ENCODE measurements at regions of chr9 and their contacts with region 1.

Region 1: GRCh38 chr9:76321205-76321828 is 72.9 kb downstream of the RFK start:
- DNase-seq: no peak
- H3K4me3 ChIP-seq: no peak overlapping the region
- H3K27ac ChIP-seq: no peak overlapping the region
- H3K4me1 ChIP-seq: no peaks in the 10 kb centered on the region
- H3K27me3 ChIP-seq: no peaks in the 10 kb centered on the region
- CTCF ChIP-seq: no peak
- POLR2A ChIP-seq: no peak

Region 2: GRCh38 chr9:75185585-75186170 is 1135.6 kb before region 1 on chr9:
- intact Hi-C with region 1: loop called (anchors 10 kb)
- DNase-seq: peak; percentile 13
- H3K4me3 ChIP-seq: no peak overlapping the region
- H3K27ac ChIP-seq: no peak overlapping the region
- H3K4me1 ChIP-seq: no peaks in the 10 kb centered on the region
- H3K27me3 ChIP-seq: no peaks in the 10 kb centered on the region
- CTCF ChIP-seq: peak in 3 of 4 experiments; percentile 12 to 34 (median 34)
- POLR2A ChIP-seq: no peak